ENCODE measurements at regions of chr20 and their contacts with region 1.

Region 1: DNA sequence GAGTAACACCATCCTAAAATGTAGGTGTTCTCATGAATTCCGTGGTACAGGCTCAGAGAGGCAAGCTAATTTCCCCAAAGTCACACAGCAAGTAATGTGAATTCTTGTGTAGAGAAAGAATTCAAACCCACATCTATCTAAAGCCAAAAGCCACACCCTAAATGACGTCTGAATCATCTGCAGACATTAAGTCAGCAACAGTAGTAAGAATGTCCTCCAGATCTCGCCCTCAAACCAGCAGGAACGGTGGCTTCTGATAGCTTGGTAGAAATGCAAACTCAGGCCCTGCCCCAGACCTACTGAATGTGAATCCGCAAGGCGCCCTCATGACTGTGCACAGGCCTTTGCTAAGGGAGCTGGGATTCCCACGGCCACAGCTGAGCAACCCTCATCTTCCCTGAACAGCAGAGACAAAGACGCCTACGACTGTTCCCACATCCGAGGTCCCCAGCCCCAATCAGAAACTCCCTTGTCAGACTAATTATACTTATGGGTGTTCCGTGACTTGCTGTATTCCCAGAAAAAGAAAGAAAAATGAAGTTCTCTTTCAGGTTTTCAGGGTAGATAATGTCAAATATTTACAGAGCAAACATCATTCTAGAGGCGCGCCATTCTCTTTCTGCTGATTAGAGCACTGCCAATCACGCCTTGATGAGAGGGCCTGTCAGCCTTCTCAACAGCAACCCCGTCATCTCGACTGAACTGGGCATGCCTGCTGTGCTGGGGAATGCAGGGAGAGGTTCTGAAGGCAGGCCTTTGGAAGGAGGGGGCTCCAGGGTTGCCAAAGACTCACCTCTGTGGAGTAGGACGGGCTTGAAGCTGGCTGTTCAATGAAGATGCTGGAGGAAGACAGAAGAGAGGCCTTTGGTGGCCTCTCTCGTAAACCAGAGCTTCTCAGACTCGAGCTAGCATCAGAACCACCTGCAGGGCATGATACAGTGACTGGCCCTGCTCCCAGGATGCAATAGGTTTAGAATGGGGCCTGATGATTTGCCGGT is 80.0 kb downstream of the ZNF217 start:
- DNase-seq: peak; percentile 97 to 98
- H3K4me3 ChIP-seq: peak overlapping the region; percentile 24; the same call in 1 of the 2 replicates
- H3K4me3 Mint-ChIP-seq: peak overlapping the region; percentile 61
- H3K27ac Mint-ChIP-seq: peak overlapping the region; percentile 96
- H3K4me1 ChIP-seq: peaks cover 47% of the 10 kb centered on the region
- H3K4me1 Mint-ChIP-seq: peaks cover 50% of the 10 kb centered on the region
- H3K27me3 ChIP-seq: no peaks in the 10 kb centered on the region
- H3K27me3 Mint-ChIP-seq: no peaks in the 10 kb centered on the region
- CTCF ChIP-seq: no peak

Region 2: GRCh38 chr20:53346341-53346660 is 167.3 kb before region 1 on chr20:
- CTCF ChIA-PET with region 1: no interaction called
- POLR2A ChIA-PET with region 1: no interaction called
- intact Hi-C with region 1: loop called (anchors 1 kb)
- DNase-seq: peak; percentile 74 to 86
- H3K4me3 ChIP-seq: no peak overlapping the region
- H3K4me3 Mint-ChIP-seq: peak overlapping the region; percentile 19
- H3K27ac Mint-ChIP-seq: peak overlapping the region; percentile 41
- H3K4me1 ChIP-seq: peaks cover 13% of the 10 kb centered on the region
- H3K4me1 Mint-ChIP-seq: peaks cover 9% of the 10 kb centered on the region
- H3K27me3 ChIP-seq: no peaks in the 10 kb centered on the region
- H3K27me3 Mint-ChIP-seq: no peaks in the 10 kb centered on the region
- CTCF ChIP-seq: no peak

Region 3: DNA sequence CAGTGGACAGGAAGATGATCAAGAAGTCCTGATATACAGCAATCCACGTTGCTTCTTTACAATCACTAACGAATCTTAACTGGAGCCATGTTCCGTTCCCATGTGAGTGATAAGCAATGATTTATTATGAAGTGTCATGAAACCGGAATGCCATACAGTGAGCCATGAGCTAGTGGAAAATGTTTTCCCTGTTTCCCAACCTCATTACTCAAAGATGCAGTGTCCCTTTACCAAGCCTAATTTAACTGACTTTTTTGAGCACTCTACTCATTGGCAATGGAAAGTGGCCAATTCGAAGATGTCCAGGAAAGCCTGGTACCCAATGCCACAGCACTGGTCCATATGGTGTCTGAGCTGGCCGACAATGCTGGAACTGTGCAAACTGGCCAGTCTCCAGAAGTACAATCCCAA is 68.3 kb before region 1 on chr20:
- CTCF ChIA-PET with region 1: interaction called, 3 read pairs
- POLR2A ChIA-PET with region 1: interaction called, 11 read pairs
- intact Hi-C with region 1: no loop called
- DNase-seq: no peak
- H3K4me3 ChIP-seq: no peak overlapping the region
- H3K4me3 Mint-ChIP-seq: no peak overlapping the region
- H3K27ac Mint-ChIP-seq: no peak overlapping the region
- H3K4me1 ChIP-seq: no peaks in the 10 kb centered on the region
- H3K4me1 Mint-ChIP-seq: no peaks in the 10 kb centered on the region
- H3K27me3 ChIP-seq: no peaks in the 10 kb centered on the region
- H3K27me3 Mint-ChIP-seq: no peaks in the 10 kb centered on the region
- CTCF ChIP-seq: no peak

Region 4: DNA sequence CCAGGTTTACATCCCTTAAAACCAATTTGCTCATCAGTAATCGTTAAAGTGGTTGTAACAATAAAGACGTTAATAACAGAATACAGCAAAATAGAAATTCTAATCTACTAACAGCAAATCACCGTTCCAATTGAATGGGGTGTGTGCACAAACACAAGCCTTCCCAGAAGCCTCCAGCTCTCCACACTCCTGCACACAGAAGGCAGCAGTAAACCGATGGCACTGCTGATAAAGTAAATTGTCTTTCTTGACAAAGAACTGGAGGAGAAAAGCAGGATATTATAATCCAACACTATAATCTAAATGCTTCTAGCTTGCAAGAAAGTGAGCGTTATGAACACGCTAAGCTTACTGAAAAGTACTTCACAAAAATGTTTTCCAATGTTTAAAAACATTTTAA is 73.0 kb after region 1 on chr20:
- CTCF ChIA-PET with region 1: no interaction called
- POLR2A ChIA-PET with region 1: no interaction called
- intact Hi-C with region 1: no loop called
- DNase-seq: no peak
- H3K4me3 ChIP-seq: no peak overlapping the region
- H3K4me3 Mint-ChIP-seq: no peak overlapping the region
- H3K27ac Mint-ChIP-seq: peak overlapping the region; percentile 74
- H3K4me1 ChIP-seq: peaks cover 40% of the 10 kb centered on the region
- H3K4me1 Mint-ChIP-seq: peaks cover 42% of the 10 kb centered on the region
- H3K27me3 ChIP-seq: no peaks in the 10 kb centered on the region
- H3K27me3 Mint-ChIP-seq: no peaks in the 10 kb centered on the region
- CTCF ChIP-seq: no peak

Measured in Caco-2 (cell line).